CD4-positive, alpha-beta T cell (primary cell): ENCODE measurements at regions of chr2 and their contacts with region 1.

Region 1: GRCh38 chr2:70258532-70258874 is 566 bp downstream of the PCYOX1 start:
- DNase-seq: peak in 3 of 14 experiments; percentile 2 to 37 (median 11)
- ATAC-seq: no peak
- H3K4me3 ChIP-seq: peak overlapping the region; percentile 73
- H3K4me3 Mint-ChIP-seq: peak overlapping the region; percentile 95
- H3K27ac ChIP-seq: peak overlapping the region in 1 of 2 donors; percentile 45
- H3K27ac Mint-ChIP-seq: peak overlapping the region; percentile 86
- H3K4me1 ChIP-seq: peaks cover 20% of the 10 kb centered on the region
- H3K4me1 Mint-ChIP-seq: peaks cover 42% of the 10 kb centered on the region
- H3K27me3 ChIP-seq: no peaks in the 10 kb centered on the region
- H3K27me3 Mint-ChIP-seq: no peaks in the 10 kb centered on the region
- CTCF ChIP-seq: no peak

Region 2: DNA sequence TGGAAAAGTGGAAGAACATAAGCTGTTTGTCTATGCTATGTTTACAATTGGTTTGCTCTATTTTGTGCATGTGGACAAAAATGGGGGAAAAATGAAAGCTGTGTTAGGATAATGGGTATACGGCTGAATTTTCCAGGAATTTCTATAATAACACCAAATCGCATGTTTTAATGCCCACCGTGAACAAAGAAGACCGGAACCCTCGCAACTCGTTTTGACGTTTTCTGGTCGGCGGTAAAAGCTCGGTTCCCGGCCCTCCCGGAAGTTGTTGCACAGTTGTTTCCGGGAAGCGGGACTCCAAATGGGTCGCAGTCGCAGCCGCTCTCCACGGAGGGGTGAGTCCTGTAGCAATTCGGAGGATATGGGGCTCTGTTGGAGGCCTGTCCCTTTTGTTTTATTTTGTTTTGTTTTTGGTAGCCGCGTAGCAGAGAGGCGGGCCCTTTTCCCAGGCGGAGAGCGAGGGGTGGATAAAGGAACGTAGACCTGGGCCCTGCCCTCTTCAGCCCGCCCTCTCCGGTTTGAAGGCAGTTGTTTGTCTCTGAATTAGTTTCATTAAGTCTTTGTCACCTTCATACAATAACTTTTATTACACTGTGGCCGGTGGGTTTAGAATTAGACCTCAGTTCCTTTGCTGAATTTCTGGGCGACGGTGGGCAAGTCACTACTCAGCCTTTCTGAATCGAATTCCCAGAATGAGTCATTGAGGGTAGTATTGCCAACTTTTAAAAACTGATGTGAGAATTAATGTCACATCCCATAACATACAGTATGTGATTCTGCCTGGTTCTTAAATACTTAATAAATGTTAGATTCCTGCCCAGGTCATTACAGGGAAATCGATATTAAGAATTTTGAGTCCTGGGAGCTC is 364.6 kb before region 1 on chr2 and contains the start of gene SNRNP27:
- CTCF ChIA-PET with region 1: no interaction called
- POLR2A ChIA-PET with region 1: interaction called, 11 read pairs
- intact Hi-C with region 1: no loop called
- DNase-seq: peak; percentile 74 to 90 (median 81)
- ATAC-seq: peak; percentile 93
- H3K4me3 ChIP-seq: peak within 1 kb of the TSS; percentile 84
- H3K4me3 Mint-ChIP-seq: peak within 1 kb of the TSS; percentile 100
- H3K27ac ChIP-seq: peak within 1 kb of the TSS; percentile 66 to 77
- H3K27ac Mint-ChIP-seq: peak within 1 kb of the TSS; percentile 99
- H3K4me1 ChIP-seq: peaks cover 19% of the 10 kb centered on the region
- H3K4me1 Mint-ChIP-seq: peaks cover 51% of the 10 kb centered on the region
- H3K27me3 ChIP-seq: no peaks in the 10 kb centered on the region
- H3K27me3 Mint-ChIP-seq: no peaks in the 10 kb centered on the region
- CTCF ChIP-seq: no peak
- total RNA-seq, gene SNRNP27: 50.9 to 54.8 TPM

Region 3: DNA sequence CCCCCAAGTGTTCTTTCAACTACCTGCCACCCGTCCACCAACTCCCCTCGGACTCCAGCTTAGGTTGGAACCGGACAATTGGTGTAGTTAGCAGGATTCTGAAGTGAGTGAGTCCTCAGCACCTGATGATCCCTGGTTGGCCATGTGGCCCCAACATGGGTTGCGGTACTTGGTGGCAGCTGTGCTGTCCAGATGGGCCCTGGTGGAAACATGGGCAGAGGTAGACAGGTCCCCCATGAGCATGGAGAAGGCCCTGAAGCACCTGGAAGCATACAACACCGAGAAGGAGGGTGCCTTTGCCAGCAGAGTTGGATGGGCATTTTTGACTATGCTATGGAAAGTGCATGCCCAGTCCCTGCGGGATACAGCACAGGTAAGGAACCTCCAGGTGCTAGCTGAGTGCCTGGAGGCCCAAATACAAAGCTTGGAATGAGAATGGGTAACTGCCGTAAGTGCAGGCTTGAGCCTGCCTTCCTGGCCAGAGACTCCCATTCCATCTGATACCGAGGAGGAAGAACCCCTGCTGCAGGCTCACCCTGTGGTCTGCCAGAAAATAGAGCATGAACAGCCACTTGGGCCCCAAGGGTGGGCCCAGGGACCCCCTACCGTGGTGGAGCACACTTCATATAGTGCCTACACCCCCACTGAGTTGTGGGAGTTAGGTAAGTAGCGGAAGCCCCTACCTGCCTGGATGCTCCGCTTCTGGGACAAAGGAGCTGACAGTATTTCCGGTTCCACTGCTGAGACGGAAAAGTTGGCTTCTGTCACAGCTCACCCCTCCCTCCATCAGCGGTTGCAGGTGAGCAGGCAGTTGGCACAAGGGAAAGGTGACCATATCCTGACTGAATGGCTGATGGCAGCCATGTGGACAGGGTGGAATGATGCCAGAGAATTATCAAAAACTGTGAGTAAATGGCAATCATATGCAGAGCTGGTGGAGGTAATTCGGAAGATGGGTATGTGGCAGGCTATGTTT is 56.4 kb before region 1 on chr2:
- CTCF ChIA-PET with region 1: no interaction called
- POLR2A ChIA-PET with region 1: no interaction called
- intact Hi-C with region 1: no loop called
- DNase-seq: no peak
- ATAC-seq: no peak
- H3K4me3 ChIP-seq: no peak overlapping the region
- H3K4me3 Mint-ChIP-seq: no peak overlapping the region
- H3K27ac ChIP-seq: no peak overlapping the region
- H3K27ac Mint-ChIP-seq: no peak overlapping the region
- H3K4me1 ChIP-seq: no peaks in the 10 kb centered on the region
- H3K4me1 Mint-ChIP-seq: no peaks in the 10 kb centered on the region
- H3K27me3 ChIP-seq: no peaks in the 10 kb centered on the region
- H3K27me3 Mint-ChIP-seq: no peaks in the 10 kb centered on the region
- CTCF ChIP-seq: no peak

Region 4: GRCh38 chr2:70214953-70215549 is 43.5 kb before region 1 on chr2:
- CTCF ChIA-PET with region 1: no interaction called
- POLR2A ChIA-PET with region 1: no interaction called
- intact Hi-C with region 1: no loop called
- DNase-seq: no peak
- ATAC-seq: no peak
- H3K4me3 ChIP-seq: no peak overlapping the region
- H3K4me3 Mint-ChIP-seq: no peak overlapping the region
- H3K27ac ChIP-seq: no peak overlapping the region
- H3K27ac Mint-ChIP-seq: no peak overlapping the region
- H3K4me1 ChIP-seq: no peaks in the 10 kb centered on the region
- H3K4me1 Mint-ChIP-seq: peaks cover 10% of the 10 kb centered on the region
- H3K27me3 ChIP-seq: no peaks in the 10 kb centered on the region
- H3K27me3 Mint-ChIP-seq: no peaks in the 10 kb centered on the region
- CTCF ChIP-seq: no peak

Region 5: GRCh38 chr2:70248181-70248847 is 10.2 kb before region 1 on chr2 and contains the start of gene TIA1:
- CTCF ChIA-PET with region 1: interaction called, 5 read pairs
- POLR2A ChIA-PET with region 1: interaction called, 62 read pairs
- intact Hi-C with region 1: loop called (anchors 1 to 2 kb)
- DNase-seq: peak; percentile 96 to 100 (median 98)
- ATAC-seq: peak; percentile 96
- H3K4me3 ChIP-seq: peak within 1 kb of the TSS; percentile 85
- H3K4me3 Mint-ChIP-seq: peak within 1 kb of the TSS; percentile 97
- H3K27ac ChIP-seq: peak within 1 kb of the TSS; percentile 85 to 97
- H3K27ac Mint-ChIP-seq: peak within 1 kb of the TSS; percentile 96
- H3K4me1 ChIP-seq: peaks cover 31% of the 10 kb centered on the region
- H3K4me1 Mint-ChIP-seq: peaks cover 47% of the 10 kb centered on the region
- H3K27me3 ChIP-seq: no peaks in the 10 kb centered on the region
- H3K27me3 Mint-ChIP-seq: peaks cover 7% of the 10 kb centered on the region
- CTCF ChIP-seq: no peak
- total RNA-seq, gene TIA1: 34.4 to 45.3 TPM

Region 6: GRCh38 chr2:70283500-70284191 is 25.1 kb after region 1 on chr2:
- CTCF ChIA-PET with region 1: interaction called, 4 read pairs
- POLR2A ChIA-PET with region 1: interaction called, 8 read pairs
- intact Hi-C with region 1: loop called in 1 of 2 experiments (anchors 2 kb)
- DNase-seq: no peak
- ATAC-seq: no peak
- H3K4me3 ChIP-seq: no peak overlapping the region
- H3K4me3 Mint-ChIP-seq: no peak overlapping the region
- H3K27ac ChIP-seq: peak overlapping the region in 1 of 2 donors; percentile 4
- H3K27ac Mint-ChIP-seq: peak overlapping the region; percentile 28
- H3K4me1 ChIP-seq: peaks cover 7% of the 10 kb centered on the region
- H3K4me1 Mint-ChIP-seq: peaks cover 52% of the 10 kb centered on the region
- H3K27me3 ChIP-seq: no peaks in the 10 kb centered on the region
- H3K27me3 Mint-ChIP-seq: no peaks in the 10 kb centered on the region
- CTCF ChIP-seq: no peak